Head of caudate nucleus (tissue), 42 donors: ENCODE measurements at regions of chr5 and their contacts with region 1.

Region 1: GRCh38 chr5:32489791-32490582 is 45.4 kb upstream of the ZFR start:
- DNase-seq: peak; percentile 41 to 91 (median 76)

Region 2: GRCh38 chr5:32585446-32586275 is 95.7 kb after region 1 on chr5 and contains the start of gene SUB1:
- intact Hi-C with region 1: loop called (anchors 5 kb)
- DNase-seq: peak; percentile 91 to 98 (median 97)

Region 3: GRCh38 chr5:32613050-32613672 is 123.2 kb after region 1 on chr5:
- intact Hi-C with region 1: loop called (anchors 5 kb)
- DNase-seq: peak; percentile 53 to 95 (median 90)

Region 4: DNA sequence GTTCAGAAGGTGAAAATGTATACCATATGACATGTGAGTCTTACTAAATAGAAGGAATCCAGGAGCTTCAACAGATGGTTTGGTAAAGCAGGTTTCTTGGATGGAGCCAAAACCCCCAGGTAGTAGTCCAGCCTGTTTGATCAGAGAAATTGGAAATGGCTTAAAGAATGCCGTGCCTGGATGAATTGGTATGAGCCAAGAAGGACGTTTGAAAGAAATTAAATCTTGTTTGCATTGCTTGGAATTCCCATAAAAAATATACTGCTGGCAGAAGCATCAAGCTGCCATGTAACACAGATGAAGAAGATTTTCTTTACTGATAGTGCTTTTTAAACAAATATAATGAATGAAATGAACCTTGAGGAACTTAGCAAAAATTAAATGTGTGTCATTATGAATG is 397.4 kb after region 1 on chr5:
- intact Hi-C with region 1: no loop called
- DNase-seq: no peak